ENCODE measurements at regions of chr11 and their contacts with region 1.

Region 1: GRCh38 chr11:74929431-74930363 is 19.2 kb downstream of the XRRA1 start:
- DNase-seq: peak; percentile 36
- ATAC-seq: peak; percentile 88

Region 2: DNA sequence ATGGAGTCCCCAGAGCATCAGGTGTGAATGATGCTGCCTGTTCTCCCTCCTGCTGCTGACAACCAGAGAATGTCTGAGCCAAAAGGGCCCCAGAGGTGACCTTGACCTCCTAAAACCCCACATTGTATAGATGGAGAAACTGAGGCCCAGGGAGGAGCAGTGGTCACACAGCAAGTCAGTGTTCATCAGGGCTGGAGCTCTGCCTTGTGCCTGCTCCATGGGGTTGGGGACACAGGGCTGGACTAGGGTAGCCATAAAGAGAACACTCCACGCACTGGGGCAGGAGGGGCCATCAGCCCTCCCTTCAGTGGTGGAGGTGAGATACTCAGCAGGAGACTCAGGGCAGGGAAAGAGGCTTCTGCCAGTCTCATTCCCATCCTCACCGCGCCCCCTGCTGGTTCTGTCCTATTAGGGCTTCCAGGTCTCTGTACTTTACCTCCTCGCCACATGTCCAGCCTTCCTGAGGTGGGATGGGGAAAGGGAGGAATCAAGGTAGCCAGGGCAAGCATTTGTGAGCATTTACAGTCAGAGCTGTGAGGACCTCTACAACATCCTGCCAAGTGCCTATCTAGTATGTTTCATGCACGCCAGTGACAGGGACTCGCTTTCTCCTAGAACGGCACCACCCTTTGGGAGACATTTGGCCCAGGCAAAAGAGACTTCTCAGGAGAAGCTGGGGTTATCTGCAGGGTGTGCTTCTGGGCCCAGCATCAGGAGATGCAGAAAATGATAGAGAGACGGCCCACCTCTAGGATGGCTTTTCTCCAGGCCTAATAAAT is 102.3 kb after region 1 on chr11:
- intact Hi-C with region 1: loop called (anchors 5 kb)
- DNase-seq: peak; percentile 83
- ATAC-seq: peak; percentile 91